ENCODE measurements at regions of chr22 and their contacts with region 1.

Region 1: DNA sequence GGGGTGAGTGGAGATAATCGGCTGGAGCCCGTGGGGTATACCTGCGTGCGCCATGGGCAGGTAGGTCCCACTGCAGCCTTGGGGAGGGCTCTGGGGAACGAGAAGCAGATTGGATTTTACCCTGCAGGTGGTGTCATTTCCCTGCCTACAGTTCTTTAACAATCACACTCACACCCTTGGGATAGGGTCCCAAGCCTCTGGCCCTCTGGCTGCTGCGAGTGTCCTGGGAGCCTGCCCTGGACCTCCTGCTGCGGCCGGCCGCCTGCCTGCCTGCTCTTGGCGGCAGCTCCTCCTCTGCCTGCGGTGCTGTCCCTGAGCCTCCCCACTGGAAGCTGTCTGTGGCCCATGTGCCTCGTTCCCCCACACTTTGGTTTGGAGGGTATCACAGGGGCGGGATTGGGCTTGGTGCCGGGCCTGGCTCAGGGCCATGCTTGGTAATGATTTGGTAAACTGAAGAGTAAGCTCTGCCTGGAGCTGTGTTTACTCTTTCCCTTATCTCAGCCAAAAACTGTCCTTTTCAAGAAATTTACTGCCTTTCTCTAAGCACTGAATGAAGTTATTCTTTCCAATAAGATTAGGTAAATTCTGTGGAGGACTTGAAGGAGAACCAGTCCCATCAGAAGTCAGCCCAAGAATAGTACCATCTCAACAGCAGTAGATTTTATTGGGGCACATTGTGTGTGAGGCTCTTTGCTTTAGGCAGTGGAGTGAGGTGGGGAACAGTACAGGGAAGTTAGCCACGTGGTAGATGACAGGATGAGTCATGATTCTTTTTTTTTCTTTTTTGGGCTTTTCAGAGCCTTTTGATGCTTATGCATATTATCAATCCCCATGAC is 53.7 kb downstream of the TBC1D22A start:
- DNase-seq: no peak
- H3K4me3 ChIP-seq: no peak overlapping the region
- H3K27ac ChIP-seq: no peak overlapping the region
- H3K4me1 ChIP-seq: peaks cover 12% of the 10 kb centered on the region
- H3K27me3 ChIP-seq: no peaks in the 10 kb centered on the region
- CTCF ChIP-seq: no peak

Region 2: GRCh38 chr22:46894081-46894671 is 78.1 kb after region 1 on chr22:
- CTCF ChIA-PET with region 1: interaction called, 11 read pairs
- dilution Hi-C with region 1: no loop called
- in situ Hi-C with region 1: no loop called
- intact Hi-C with region 1: no loop called
- DNase-seq: no peak
- H3K4me3 ChIP-seq: no peak overlapping the region
- H3K27ac ChIP-seq: no peak overlapping the region
- H3K4me1 ChIP-seq: no peaks in the 10 kb centered on the region
- H3K27me3 ChIP-seq: no peaks in the 10 kb centered on the region
- CTCF ChIP-seq: no peak

Region 3: DNA sequence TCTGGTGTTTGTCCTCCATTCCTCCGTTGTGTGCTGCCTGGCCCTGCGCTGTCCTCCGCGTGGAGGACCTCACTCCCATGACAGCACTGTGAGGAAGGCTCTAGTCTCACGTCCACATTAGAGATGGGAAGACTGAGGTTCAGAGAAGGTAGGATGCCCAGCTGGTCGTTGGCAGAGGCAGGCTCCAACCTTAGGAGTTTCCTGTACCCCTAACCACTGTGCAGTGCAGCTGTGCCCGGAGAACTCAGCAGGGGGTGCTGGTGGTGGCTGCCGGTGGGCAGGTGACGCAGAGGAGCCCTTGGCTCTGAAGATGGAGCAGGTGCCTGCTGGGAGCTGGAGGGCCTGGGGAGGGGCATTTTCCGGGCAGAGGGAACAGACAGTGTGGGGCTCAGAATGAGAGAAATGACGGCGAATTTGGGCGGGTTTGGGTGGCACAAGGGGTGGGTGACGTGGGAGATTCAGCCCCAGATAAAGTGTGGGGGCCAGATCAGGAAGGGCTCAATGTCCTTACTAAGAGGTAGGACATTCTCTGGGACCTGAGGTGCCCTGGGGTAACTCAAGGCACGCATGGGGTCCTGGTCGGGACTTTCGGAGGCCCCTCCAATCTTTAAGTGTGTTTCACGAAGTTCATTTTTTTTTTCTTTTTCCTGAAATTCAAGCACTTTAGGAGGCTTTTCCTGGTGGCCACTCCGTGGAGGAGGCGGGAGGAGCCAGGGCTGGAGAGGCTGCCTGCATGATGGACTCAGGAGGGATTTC is 481.3 kb after region 1 on chr22:
- CTCF ChIA-PET with region 1: no interaction called
- dilution Hi-C with region 1: no loop called
- in situ Hi-C with region 1: no loop called
- intact Hi-C with region 1: no loop called
- DNase-seq: no peak
- H3K4me3 ChIP-seq: no peak overlapping the region
- H3K27ac ChIP-seq: no peak overlapping the region
- H3K4me1 ChIP-seq: no peaks in the 10 kb centered on the region
- H3K27me3 ChIP-seq: no peaks in the 10 kb centered on the region
- CTCF ChIP-seq: no peak

Region 4: DNA sequence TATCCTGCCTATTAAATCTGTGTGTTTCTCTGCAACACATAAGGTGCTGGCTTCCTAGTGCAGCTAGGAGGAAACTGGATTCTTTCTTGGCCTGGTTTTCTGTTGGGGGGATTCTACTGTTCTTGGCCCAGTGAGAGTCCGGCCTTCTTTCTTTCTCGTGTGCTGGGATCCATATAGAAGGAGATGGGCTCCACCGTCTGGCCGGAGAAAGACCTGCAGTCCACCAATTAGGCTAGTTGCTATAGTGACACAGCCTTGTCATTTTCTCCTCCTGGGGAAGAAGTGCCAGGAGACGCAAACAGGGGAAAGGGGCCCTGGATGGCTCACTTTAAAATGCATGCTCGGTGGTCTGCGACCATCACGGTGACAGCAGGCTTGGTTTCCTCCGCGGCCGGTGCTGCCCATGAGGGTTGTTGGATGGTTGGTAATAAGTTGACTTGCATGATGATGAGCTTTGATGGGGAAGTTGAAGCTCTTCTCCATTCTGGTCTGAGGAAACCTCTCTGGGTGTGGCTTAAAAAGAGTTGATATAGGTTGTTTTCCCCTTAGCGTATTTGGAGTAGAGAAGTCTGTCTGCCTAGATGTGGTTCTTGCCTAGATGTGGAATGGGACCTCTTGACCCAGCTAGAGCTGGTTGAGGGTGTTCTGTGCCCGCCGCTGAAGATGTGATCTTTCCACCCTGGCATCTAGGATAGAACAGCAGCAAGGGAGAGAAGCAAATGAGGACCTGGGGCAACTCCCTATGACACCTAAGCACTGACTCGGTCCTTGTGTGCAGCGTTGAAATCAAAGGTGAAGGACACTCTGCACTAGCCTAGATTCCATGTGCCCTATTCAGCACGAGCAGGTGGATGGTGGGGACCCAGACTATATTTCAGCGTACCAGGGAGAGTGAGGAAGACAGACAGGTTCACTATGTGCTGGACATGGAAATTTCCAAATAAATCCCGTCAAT is 1676.5 kb after region 1 on chr22:
- CTCF ChIA-PET with region 1: no interaction called
- dilution Hi-C with region 1: no loop called
- in situ Hi-C with region 1: no loop called
- intact Hi-C with region 1: loop called (anchors 5 kb)
- DNase-seq: peak; percentile 31
- H3K4me3 ChIP-seq: no peak overlapping the region
- H3K27ac ChIP-seq: no peak overlapping the region
- H3K4me1 ChIP-seq: no peaks in the 10 kb centered on the region
- H3K27me3 ChIP-seq: peaks cover 15% of the 10 kb centered on the region
- CTCF ChIP-seq: peak; percentile 69 to 75